GM10248 (cell line): ENCODE measurements at regions of chr6 and their contacts with region 1.

Region 1: DNA sequence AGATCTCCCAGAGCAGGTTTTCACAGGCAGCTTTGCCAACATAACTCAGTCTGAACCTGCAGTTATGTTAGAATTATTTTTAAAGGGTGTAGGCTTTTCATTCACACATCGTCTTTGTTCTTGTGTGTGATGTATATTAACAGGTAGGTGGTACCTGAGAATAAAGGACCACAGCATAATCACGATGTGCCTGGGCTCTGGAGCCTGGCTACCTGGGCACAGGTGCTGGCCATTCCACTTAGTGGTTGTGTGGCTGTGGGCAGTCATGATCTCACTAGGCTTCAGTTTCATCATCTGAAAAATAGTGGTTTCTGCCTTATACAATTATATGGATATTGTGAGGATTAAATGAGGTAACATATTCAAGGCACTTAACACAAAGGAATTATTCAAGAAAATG is 6.4 kb downstream of the CD109 start:
- DNase-seq: no peak
- CTCF ChIP-seq: no peak

Region 2: DNA sequence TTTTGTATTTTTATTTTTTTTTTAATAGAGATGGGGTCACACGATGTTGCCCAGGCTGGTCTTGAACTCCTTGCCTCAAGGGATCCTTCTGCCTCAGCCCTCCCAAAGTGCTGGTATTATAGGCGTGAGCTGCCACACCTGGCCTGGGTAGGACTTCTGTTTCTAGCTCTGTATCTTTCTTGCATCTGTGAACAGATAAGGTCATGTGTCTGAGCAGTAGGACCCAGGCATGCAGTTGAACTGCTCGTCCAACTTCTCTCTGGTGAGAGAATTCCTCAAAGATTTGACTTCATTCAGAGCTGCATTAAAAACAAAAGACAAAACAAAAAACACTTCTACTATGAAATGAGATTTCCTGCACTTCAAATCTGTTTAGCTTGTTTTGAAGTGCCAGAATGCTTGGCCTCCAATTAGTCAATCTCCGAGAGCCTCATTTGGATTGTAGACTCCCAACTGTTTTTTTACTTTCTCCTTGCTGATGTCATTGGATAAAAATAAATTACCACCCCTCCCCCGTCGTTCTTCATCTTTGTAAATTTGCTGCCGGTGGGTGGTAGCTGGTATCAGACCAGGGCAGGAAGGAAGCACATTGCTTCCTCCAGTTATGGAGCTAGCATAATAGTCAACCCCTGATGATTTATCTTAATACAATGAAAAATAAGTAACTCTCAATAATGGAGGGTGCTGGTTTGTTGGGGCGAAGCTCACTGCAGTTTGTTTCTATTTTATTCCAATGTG is 11.1 kb after region 1 on chr6:
- CTCF ChIA-PET with region 1: interaction called, 10 read pairs
- POLR2A ChIA-PET with region 1: no interaction called
- DNase-seq: no peak
- CTCF ChIP-seq: no peak